ENCODE measurements at regions of chr15 and their contacts with region 1.

Region 1: GRCh38 chr15:72199711-72200212 is 2.2 kb upstream of the GRAMD2A start:
- DNase-seq: peak; percentile 76 to 90
- ATAC-seq: peak; percentile 45 to 67
- H3K4me3 ChIP-seq: no peak overlapping the region
- H3K27ac ChIP-seq: peak overlapping the region; percentile 82 to 96 (median 92)
- H3K4me1 ChIP-seq: peaks cover 47 to 49% of the 10 kb centered on the region in 2 donors
- H3K27me3 ChIP-seq: no peaks in the 10 kb centered on the region
- CTCF ChIP-seq: peak; percentile 92 to 95 (median 94)
- POLR2A ChIP-seq: no peak

Region 2: GRCh38 chr15:71707230-71708050 is 492.3 kb before region 1 on chr15:
- in situ Hi-C with region 1: no loop called
- intact Hi-C with region 1: no loop called
- DNase-seq: no peak
- ATAC-seq: peak in 1 of 2 donors; percentile 37
- H3K4me3 ChIP-seq: no peak overlapping the region
- H3K27ac ChIP-seq: peak overlapping the region; percentile 15 to 51 (median 26)
- H3K4me1 ChIP-seq: peaks cover 0 to 6% of the 10 kb centered on the region in 2 donors
- H3K27me3 ChIP-seq: no peaks in the 10 kb centered on the region
- CTCF ChIP-seq: no peak
- POLR2A ChIP-seq: no peak

Region 3: DNA sequence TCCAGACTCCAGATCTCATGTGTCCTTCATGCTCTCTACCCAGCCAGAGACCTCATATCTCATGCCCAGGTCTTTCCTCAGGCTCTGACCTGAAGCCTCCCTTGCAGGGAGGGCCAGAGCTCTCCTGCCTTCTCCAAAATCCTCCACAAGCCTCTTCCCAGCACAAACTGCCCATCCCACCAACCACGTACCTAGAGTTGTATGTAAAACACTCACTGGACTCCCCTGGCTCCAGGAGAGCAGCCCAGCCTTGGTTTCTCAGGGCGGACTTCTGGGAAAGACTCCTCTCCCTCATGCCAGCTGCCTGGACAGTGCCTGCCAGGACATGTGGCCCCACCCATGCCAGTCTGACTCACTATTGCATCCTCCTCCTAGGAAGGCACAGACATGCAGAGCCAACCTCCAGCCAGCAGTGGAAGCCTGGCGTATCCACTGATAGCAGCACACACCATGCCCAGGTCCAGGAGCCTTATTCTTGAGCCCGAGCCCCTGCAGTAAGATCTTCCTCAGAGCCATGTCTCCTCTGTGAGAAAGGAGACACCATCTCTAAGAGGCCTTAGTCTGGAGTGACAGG is 22.6 kb after region 1 on chr15:
- in situ Hi-C with region 1: no loop called
- intact Hi-C with region 1: loop called (anchors 2 kb)
- DNase-seq: peak; percentile 89 to 96
- ATAC-seq: peak; percentile 78 to 82
- H3K4me3 ChIP-seq: no peak overlapping the region
- H3K27ac ChIP-seq: peak overlapping the region; percentile 96 to 99 (median 98)
- H3K4me1 ChIP-seq: peaks cover 77 to 86% of the 10 kb centered on the region in 2 donors
- H3K27me3 ChIP-seq: no peaks in the 10 kb centered on the region
- CTCF ChIP-seq: peak in 1 of 5 experiments; percentile 40
- POLR2A ChIP-seq: peak; percentile 42 to 53

Region 4: DNA sequence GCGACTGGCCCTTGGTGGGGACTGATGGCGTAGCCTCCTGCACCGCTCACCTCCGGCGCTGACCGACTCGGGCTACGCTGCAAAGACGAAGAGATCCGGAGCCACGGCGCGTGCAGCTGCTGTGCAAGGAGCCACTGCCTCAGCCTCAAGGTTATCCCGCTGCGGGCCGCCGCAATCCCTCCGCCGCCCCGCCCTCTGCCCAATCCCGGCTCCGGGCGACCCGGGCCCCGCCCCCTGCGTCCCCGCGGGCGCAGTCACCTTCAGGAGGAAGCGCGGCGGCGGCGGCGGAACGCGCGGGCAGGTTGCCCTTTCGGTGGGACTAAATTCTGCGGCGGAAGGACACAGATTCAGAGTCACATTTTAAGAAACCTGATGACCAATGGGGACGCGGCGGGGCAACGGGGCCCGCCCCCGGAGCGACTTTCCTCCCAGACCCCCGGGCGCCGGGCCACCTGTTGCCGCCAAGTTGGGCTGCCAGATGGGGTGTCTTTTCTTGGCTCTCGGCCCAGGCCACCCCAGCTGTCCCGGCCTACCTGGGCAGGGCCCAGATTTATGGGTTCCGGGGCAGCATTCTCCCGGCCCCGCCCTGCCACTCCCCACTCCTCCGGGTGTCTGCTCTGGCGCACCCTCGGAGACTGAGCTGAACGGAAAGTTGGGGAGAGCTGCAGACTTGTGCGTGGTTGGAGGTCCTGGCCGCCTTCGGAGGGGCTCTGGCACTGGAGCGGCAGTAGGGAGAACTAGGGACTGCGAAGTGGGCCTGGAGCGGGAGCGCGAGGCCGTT is 31.5 kb after region 1 on chr15 and contains the start of gene PKM:
- in situ Hi-C with region 1: no loop called
- intact Hi-C with region 1: loop called (anchors 1 kb)
- DNase-seq: peak; percentile 91 to 97
- ATAC-seq: peak; percentile 55 to 70
- H3K4me3 ChIP-seq: peak within 1 kb of the TSS; percentile 68 to 96 (median 80)
- H3K27ac ChIP-seq: peak within 1 kb of the TSS; percentile 96 to 99 (median 98)
- H3K4me1 ChIP-seq: peaks cover 35 to 46% of the 10 kb centered on the region in 2 donors
- H3K27me3 ChIP-seq: no peaks in the 10 kb centered on the region
- CTCF ChIP-seq: peak in 1 of 5 experiments; percentile 46
- POLR2A ChIP-seq: peak; percentile 98
- total RNA-seq, gene PKM: 691 to 946 (median 810) TPM

Region 5: GRCh38 chr15:72285927-72286516 is 86.3 kb after region 1 on chr15:
- in situ Hi-C with region 1: no loop called
- intact Hi-C with region 1: loop called (anchors 1 kb)
- DNase-seq: peak; percentile 7 to 37
- ATAC-seq: peak; percentile 60 to 77
- H3K4me3 ChIP-seq: no peak overlapping the region
- H3K27ac ChIP-seq: no peak overlapping the region
- H3K4me1 ChIP-seq: no peaks in the 10 kb centered on the region
- H3K27me3 ChIP-seq: no peaks in the 10 kb centered on the region
- CTCF ChIP-seq: peak; percentile 19 to 73 (median 56)
- POLR2A ChIP-seq: no peak